Activated CD4-positive, alpha-beta T cell treated with anti-CD3 and anti-CD28 coated beads for 36 hours (primary cell): ENCODE measurements at regions of chr1 and their contacts with region 1.

Region 1: GRCh38 chr1:228073857-228074545 is 8.5 kb upstream of the ARF1 start:
- DNase-seq: no peak
- ATAC-seq: no peak
- H3K4me3 Mint-ChIP-seq: no peak overlapping the region
- H3K27ac Mint-ChIP-seq: no peak overlapping the region
- H3K4me1 Mint-ChIP-seq: peaks cover 4% of the 10 kb centered on the region
- H3K27me3 Mint-ChIP-seq: no peaks in the 10 kb centered on the region

Region 2: GRCh38 chr1:228004331-228004855 is 69.6 kb before region 1 on chr1:
- CTCF ChIA-PET with region 1: interaction called, 4 read pairs
- POLR2A ChIA-PET with region 1: no interaction called
- intact Hi-C with region 1: loop called in 1 of 2 experiments (anchors 1 kb)
- DNase-seq: peak; percentile 43
- ATAC-seq: peak; percentile 62
- H3K4me3 Mint-ChIP-seq: no peak overlapping the region
- H3K27ac Mint-ChIP-seq: no peak overlapping the region
- H3K4me1 Mint-ChIP-seq: peaks cover 2% of the 10 kb centered on the region
- H3K27me3 Mint-ChIP-seq: peaks cover 44% of the 10 kb centered on the region

Region 3: GRCh38 chr1:228043281-228043890 is 30.6 kb before region 1 on chr1:
- CTCF ChIA-PET with region 1: no interaction called
- POLR2A ChIA-PET with region 1: no interaction called
- intact Hi-C with region 1: no loop called
- DNase-seq: no peak
- ATAC-seq: no peak
- H3K4me3 Mint-ChIP-seq: no peak overlapping the region
- H3K27ac Mint-ChIP-seq: no peak overlapping the region
- H3K4me1 Mint-ChIP-seq: no peaks in the 10 kb centered on the region
- H3K27me3 Mint-ChIP-seq: peaks cover 12% of the 10 kb centered on the region